Dendritic cell treated with granulocyte-macrophage colony-stimulating factor and Interleukin-4, amounts not matched to agents 40 ng/mL and 50 ng/mL, for 4 days (primary cell): ENCODE measurements at regions of chr20 and their contacts with region 1.

Region 1: GRCh38 chr20:63864847-63865640 is at the start of gene TPD52L2:
- H3K4me3 Mint-ChIP-seq: peak within 1 kb of the TSS; percentile 85
- H3K27ac Mint-ChIP-seq: peak within 1 kb of the TSS; percentile 88
- H3K4me1 Mint-ChIP-seq: peaks cover 62% of the 10 kb centered on the region
- H3K27me3 Mint-ChIP-seq: no peaks in the 10 kb centered on the region

Region 2: DNA sequence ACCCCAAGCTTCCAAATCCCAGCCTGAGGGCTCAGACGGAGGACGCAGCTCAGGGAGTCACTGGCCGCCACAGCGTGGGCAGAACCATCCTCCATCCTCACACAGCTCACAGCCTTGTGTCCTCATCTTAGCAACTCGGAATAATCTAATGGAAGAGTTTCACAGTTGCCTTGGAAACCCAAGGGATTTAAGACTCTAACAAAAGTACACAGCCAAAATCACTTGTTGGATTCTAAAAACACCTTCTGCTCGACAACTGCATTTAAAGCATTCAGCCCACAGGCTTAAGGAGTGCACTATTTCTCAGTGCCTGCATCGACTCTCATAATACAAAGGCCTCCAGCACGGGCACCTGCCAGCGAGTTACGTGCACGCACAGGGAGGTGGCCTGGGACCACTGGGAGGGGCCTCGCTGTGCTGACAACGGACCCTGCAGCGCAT is 79.3 kb before region 1 on chr20:
- intact Hi-C with region 1: loop called (anchors 2 kb)
- H3K4me3 Mint-ChIP-seq: no peak overlapping the region
- H3K27ac Mint-ChIP-seq: no peak overlapping the region
- H3K4me1 Mint-ChIP-seq: peaks cover 10% of the 10 kb centered on the region
- H3K27me3 Mint-ChIP-seq: no peaks in the 10 kb centered on the region

Region 3: GRCh38 chr20:63829932-63830835 is 34.9 kb before region 1 on chr20:
- intact Hi-C with region 1: loop called (anchors 5 kb)
- H3K4me3 Mint-ChIP-seq: peak overlapping the region; percentile 90
- H3K27ac Mint-ChIP-seq: peak overlapping the region; percentile 87
- H3K4me1 Mint-ChIP-seq: peaks cover 67% of the 10 kb centered on the region
- H3K27me3 Mint-ChIP-seq: peaks cover 69% of the 10 kb centered on the region

Region 4: GRCh38 chr20:63894358-63895201 is 29.5 kb after region 1 on chr20 and contains the start of gene DNAJC5:
- intact Hi-C with region 1: loop called (anchors 1 kb)
- H3K4me3 Mint-ChIP-seq: peak within 1 kb of the TSS; percentile 79
- H3K27ac Mint-ChIP-seq: peak within 1 kb of the TSS; percentile 93
- H3K4me1 Mint-ChIP-seq: peaks cover 58% of the 10 kb centered on the region
- H3K27me3 Mint-ChIP-seq: no peaks in the 10 kb centered on the region

Region 5: DNA sequence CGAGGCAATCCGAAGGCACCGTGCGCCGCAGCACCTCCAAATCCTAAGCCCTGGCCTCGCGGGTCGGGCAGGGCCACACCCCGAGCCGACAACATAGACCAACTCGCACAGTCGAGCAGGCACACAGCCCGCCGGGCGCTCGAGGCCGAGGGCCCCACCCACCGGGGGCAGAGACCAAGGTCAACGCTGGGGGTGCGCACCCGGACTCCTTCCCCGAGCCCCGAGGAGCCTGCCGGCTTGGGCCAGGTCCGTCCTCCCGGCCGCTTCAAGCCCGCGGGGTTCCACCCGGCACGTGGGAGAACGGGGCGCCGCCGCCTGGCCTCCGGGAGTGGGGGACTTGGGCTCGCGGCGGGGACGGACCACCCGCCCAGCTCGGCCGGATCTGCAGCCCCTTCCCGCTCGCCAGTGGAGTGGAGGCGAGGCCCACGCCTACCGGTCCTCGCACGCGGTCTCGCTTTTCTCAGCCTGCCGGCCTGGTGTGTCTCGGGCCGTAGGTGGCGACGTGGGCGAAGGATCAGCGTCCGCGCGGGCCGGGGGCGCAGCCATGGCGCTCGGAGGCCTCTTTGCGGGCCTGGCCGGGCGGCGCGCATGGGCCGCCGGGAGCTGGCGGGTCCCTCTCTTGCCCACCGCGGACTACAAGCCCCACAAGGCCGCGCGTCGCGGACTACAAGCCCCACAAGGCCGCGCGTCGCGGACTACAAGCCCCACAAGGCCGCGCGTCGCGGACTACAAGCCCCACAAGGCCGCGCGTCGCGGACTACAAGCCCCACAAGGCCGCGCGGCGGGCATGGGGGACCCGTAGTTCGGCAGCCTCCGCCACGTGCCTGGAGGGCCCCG is 91.0 kb after region 1 on chr20 and contains the start of gene UCKL1:
- intact Hi-C with region 1: no loop called
- H3K4me3 Mint-ChIP-seq: peak within 1 kb of the TSS; percentile 84
- H3K27ac Mint-ChIP-seq: peak within 1 kb of the TSS; percentile 84
- H3K4me1 Mint-ChIP-seq: peaks cover 54% of the 10 kb centered on the region
- H3K27me3 Mint-ChIP-seq: peaks cover 2% of the 10 kb centered on the region

Region 6: DNA sequence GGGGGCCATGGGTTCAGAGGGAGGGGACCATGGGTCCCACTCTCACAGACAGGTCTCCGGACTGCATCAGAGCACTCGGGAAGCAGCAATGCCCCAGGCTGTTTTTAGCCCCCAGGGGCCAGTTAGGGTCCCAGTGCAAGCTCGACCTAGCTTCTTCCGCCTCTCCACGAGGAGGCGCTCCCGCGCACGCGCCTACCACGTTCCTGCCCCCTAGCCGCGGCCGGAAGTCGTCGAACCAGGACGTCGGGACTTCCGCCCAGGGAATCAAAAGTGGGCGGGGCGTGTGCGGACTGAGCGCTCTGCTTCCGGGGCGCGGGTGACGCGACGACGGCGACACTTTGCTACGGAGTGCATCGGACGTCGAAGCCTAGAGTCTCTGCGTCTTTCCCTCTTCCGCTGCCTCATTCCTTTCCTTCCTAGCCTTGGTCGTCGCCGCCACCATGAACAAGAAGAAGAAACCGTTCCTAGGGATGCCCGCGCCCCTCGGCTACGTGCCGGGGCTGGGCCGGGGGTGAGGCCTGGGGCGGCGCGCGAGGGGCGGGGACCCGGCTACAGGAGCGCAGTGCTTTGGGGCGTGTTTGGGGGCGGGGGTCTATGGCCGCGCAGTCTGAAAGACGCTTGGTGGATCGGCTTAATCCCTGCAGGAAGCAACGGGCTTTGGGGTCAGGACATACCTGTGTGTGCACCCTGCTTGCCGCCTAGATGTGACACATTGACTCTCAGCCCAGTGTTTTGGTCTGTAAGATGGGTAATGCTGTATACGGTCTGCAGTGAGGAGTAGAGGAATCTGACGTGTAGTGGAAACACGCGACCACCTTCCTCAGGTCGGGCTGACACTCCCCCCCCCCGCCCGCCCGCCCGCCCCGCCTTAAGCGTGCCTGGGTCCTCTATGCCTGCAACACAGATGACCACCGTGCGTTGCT is 116.0 kb after region 1 on chr20 and contains the start of gene PRPF6:
- intact Hi-C with region 1: no loop called
- H3K4me3 Mint-ChIP-seq: peak within 1 kb of the TSS; percentile 81
- H3K27ac Mint-ChIP-seq: peak within 1 kb of the TSS; percentile 85
- H3K4me1 Mint-ChIP-seq: peaks cover 59% of the 10 kb centered on the region
- H3K27me3 Mint-ChIP-seq: peaks cover 3% of the 10 kb centered on the region